Activated CD4-positive, alpha-beta memory T cell treated with anti-CD3 and anti-CD28 coated beads for 36 hours (primary cell): ENCODE measurements at regions of chr12 and their contacts with region 1.

Region 1: DNA sequence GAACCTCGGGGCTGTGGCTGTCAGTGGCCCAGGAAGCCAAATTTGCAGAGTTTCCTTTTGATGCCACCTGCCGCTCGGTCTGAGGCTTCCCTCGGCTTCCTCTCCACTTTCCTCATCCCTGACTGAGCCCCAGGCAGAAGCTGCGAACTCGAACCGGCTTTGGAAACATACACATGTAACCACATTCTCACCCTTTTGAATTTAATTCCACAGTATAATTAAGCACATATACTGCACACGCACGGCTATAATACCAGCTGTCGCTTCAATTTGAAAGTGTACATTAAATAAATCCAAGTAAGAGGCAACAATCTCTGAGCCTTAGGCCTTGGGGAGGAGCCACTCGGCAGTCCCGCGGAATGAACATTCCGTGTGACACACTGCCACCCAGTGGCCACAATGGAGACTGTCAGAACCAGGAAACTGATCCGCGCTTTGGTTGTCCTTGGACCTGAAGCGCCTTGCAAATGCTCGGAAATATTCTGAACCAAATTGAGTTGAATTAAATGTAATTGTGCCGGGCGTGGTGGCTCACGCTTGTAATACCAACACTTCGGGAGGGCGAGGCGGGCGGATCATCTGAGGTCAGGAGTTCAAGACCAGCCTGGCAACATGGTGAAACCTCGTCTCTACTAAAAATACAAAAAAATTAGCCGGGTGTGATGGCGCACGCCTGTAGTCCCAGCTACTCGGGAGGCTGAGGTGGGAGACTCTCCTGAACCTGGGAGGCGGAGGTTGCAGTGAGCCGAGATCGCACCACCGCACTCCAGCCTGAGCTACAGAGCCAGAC is 117.9 kb upstream of the TMPO start:
- DNase-seq: peak; percentile 89
- H3K4me3 Mint-ChIP-seq: peak overlapping the region; percentile 71
- H3K27ac Mint-ChIP-seq: peak overlapping the region; percentile 50
- H3K4me1 Mint-ChIP-seq: peaks cover 31% of the 10 kb centered on the region
- H3K27me3 Mint-ChIP-seq: no peaks in the 10 kb centered on the region

Region 2: GRCh38 chr12:96578526-96579125 is 1818.9 kb before region 1 on chr12:
- CTCF ChIA-PET with region 1: interaction called, 5 read pairs
- POLR2A ChIA-PET with region 1: no interaction called
- intact Hi-C with region 1: loop called (anchors 2 kb)
- DNase-seq: no peak
- H3K4me3 Mint-ChIP-seq: no peak overlapping the region
- H3K27ac Mint-ChIP-seq: no peak overlapping the region
- H3K4me1 Mint-ChIP-seq: no peaks in the 10 kb centered on the region
- H3K27me3 Mint-ChIP-seq: no peaks in the 10 kb centered on the region

Region 3: GRCh38 chr12:97148941-97149559 is 1248.5 kb before region 1 on chr12:
- CTCF ChIA-PET with region 1: interaction called, 15 read pairs
- POLR2A ChIA-PET with region 1: no interaction called
- intact Hi-C with region 1: loop called (anchors 2 kb)
- DNase-seq: peak; percentile 68
- H3K4me3 Mint-ChIP-seq: no peak overlapping the region
- H3K27ac Mint-ChIP-seq: no peak overlapping the region
- H3K4me1 Mint-ChIP-seq: no peaks in the 10 kb centered on the region
- H3K27me3 Mint-ChIP-seq: peaks cover 7% of the 10 kb centered on the region

Region 4: GRCh38 chr12:98352218-98352811 is 45.2 kb before region 1 on chr12:
- CTCF ChIA-PET with region 1: interaction called, 3 read pairs
- POLR2A ChIA-PET with region 1: no interaction called
- intact Hi-C with region 1: loop called (anchors 1 kb)
- DNase-seq: peak; percentile 26
- H3K4me3 Mint-ChIP-seq: no peak overlapping the region
- H3K27ac Mint-ChIP-seq: no peak overlapping the region
- H3K4me1 Mint-ChIP-seq: peaks cover 18% of the 10 kb centered on the region
- H3K27me3 Mint-ChIP-seq: peaks cover 5% of the 10 kb centered on the region

Region 5: GRCh38 chr12:98754095-98754494 is 356.6 kb after region 1 on chr12:
- CTCF ChIA-PET with region 1: no interaction called
- POLR2A ChIA-PET with region 1: no interaction called
- intact Hi-C with region 1: loop called (anchors 5 kb)
- DNase-seq: peak; percentile 79
- H3K4me3 Mint-ChIP-seq: peak overlapping the region; percentile 6
- H3K27ac Mint-ChIP-seq: peak overlapping the region; percentile 47
- H3K4me1 Mint-ChIP-seq: peaks cover 17% of the 10 kb centered on the region
- H3K27me3 Mint-ChIP-seq: peaks cover 2% of the 10 kb centered on the region